Naive thymus-derived CD4-positive, alpha-beta T cell (primary cell): ENCODE measurements at regions of chr6 and their contacts with region 1.

Region 1: DNA sequence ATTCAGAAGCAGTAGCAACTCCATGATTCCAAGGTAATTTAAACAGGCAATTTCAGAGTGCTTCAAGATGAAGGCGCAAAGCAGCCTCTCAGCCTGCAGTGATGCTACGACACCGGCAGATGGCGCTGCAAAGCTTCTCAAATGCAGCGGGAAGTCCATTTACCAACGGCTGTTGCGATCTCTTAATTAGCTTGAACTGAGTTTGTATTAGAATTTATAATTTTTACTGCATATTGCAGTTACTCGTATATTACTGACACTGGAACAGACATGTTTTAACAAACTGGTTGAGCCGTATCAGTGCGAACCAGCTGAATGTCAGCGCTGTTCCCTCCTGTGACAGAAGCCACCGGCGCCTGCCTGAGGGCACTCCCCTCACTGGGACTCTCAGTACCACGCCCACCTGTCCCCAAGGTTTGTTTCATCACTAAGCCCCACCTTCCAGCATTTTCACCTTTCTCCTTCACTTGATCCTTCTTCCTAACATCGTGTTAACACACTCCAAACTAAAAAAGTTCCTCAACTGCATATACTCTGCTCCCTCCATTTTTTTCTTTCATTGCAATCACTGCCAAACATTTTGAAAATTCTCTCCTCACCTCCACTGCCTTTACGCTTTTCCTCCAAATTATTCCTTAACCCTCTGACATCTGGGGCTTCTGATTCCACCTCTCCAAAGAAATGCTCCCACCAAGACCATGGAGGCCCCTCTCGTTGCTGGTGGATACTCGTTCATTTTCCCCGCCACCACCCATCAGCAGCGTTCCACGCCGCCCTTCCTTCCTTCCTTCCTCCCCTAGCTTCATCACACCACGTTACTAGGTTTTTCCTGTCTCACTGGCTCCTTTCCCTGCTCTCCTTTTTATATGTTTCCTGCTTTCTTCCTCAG is 14.5 kb downstream of the GNL1 start:
- DNase-seq: peak; percentile 60 to 84 (median 81)
- ATAC-seq: peak; percentile 84
- H3K4me3 ChIP-seq: peak overlapping the region; percentile 64
- H3K4me3 Mint-ChIP-seq: peak overlapping the region; percentile 83 to 92 (median 86)
- H3K27ac ChIP-seq: peak overlapping the region; percentile 67
- H3K27ac Mint-ChIP-seq: peak overlapping the region; percentile 82 to 96 (median 93)
- H3K4me1 ChIP-seq: peaks cover 26 to 29% of the 10 kb centered on the region in 2 donors
- H3K4me1 Mint-ChIP-seq: peaks cover 29 to 38% (median 35%) of the 10 kb centered on the region in 7 donors
- H3K27me3 ChIP-seq: no peaks in the 10 kb centered on the region
- H3K27me3 Mint-ChIP-seq: peaks cover 0 to 3% (median 0%) of the 10 kb centered on the region in 5 donors

Region 2: GRCh38 chr6:30453508-30454116 is 88.1 kb before region 1 on chr6:
- CTCF ChIA-PET with region 1: interaction called, 4 read pairs
- POLR2A ChIA-PET with region 1: interaction called, 4 read pairs
- intact Hi-C with region 1: loop called in 1 of 2 experiments (anchors 1 kb)
- DNase-seq: peak; percentile 73 to 90 (median 81)
- ATAC-seq: peak; percentile 86
- H3K4me3 ChIP-seq: peak overlapping the region; percentile 43
- H3K4me3 Mint-ChIP-seq: peak overlapping the region; percentile 49 to 84 (median 73)
- H3K27ac ChIP-seq: no peak overlapping the region
- H3K27ac Mint-ChIP-seq: no peak overlapping the region
- H3K4me1 ChIP-seq: peaks cover 37 to 44% of the 10 kb centered on the region in 2 donors
- H3K4me1 Mint-ChIP-seq: peaks cover 23 to 56% (median 51%) of the 10 kb centered on the region in 7 donors
- H3K27me3 ChIP-seq: peaks cover 22 to 29% of the 10 kb centered on the region in 2 donors
- H3K27me3 Mint-ChIP-seq: peaks cover 67 to 91% (median 82%) of the 10 kb centered on the region in 5 donors

Region 3: GRCh38 chr6:30500421-30501355 is 41.1 kb before region 1 on chr6:
- CTCF ChIA-PET with region 1: interaction called, 77 read pairs
- POLR2A ChIA-PET with region 1: interaction called, 199 read pairs
- intact Hi-C with region 1: no loop called
- DNase-seq: no peak
- ATAC-seq: peak; percentile 35
- H3K4me3 ChIP-seq: peak overlapping the region; percentile 48
- H3K4me3 Mint-ChIP-seq: peak overlapping the region; percentile 76 to 89 (median 86)
- H3K27ac ChIP-seq: peak overlapping the region; percentile 36
- H3K27ac Mint-ChIP-seq: peak overlapping the region; percentile 39 to 93 (median 85)
- H3K4me1 ChIP-seq: peaks cover 9 to 31% of the 10 kb centered on the region in 2 donors
- H3K4me1 Mint-ChIP-seq: peaks cover 24 to 50% (median 46%) of the 10 kb centered on the region in 7 donors
- H3K27me3 ChIP-seq: no peaks in the 10 kb centered on the region
- H3K27me3 Mint-ChIP-seq: no peaks in the 10 kb centered on the region

Region 4: GRCh38 chr6:30556066-30556905 is 14.5 kb after region 1 on chr6 and contains the start of gene GNL1:
- CTCF ChIA-PET with region 1: interaction called, 41 read pairs
- POLR2A ChIA-PET with region 1: interaction called, 108 read pairs
- intact Hi-C with region 1: loop called (anchors 1 kb)
- DNase-seq: peak; percentile 95 to 99 (median 99)
- ATAC-seq: peak; percentile 94
- H3K4me3 ChIP-seq: peak within 1 kb of the TSS; percentile 97
- H3K4me3 Mint-ChIP-seq: peak within 1 kb of the TSS; percentile 92 to 100 (median 98)
- H3K27ac ChIP-seq: peak within 1 kb of the TSS; percentile 97
- H3K27ac Mint-ChIP-seq: peak within 1 kb of the TSS; percentile 98 to 100 (median 99)
- H3K4me1 ChIP-seq: peaks cover 8 to 19% of the 10 kb centered on the region in 2 donors
- H3K4me1 Mint-ChIP-seq: peaks cover 25 to 58% (median 45%) of the 10 kb centered on the region in 7 donors
- H3K27me3 ChIP-seq: no peaks in the 10 kb centered on the region
- H3K27me3 Mint-ChIP-seq: no peaks in the 10 kb centered on the region
- total RNA-seq, gene GNL1: 56.0 to 190 (median 73.1) TPM

Region 5: GRCh38 chr6:30600451-30600961 is 58.7 kb after region 1 on chr6:
- CTCF ChIA-PET with region 1: interaction called, 104 read pairs
- POLR2A ChIA-PET with region 1: interaction called, 57 read pairs
- intact Hi-C with region 1: loop called (anchors 1 kb)
- DNase-seq: no peak
- ATAC-seq: no peak
- H3K4me3 ChIP-seq: no peak overlapping the region
- H3K4me3 Mint-ChIP-seq: no peak overlapping the region
- H3K27ac ChIP-seq: peak overlapping the region; percentile 47
- H3K27ac Mint-ChIP-seq: peak overlapping the region in 7 of 9 donors; percentile 58 to 85 (median 79)
- H3K4me1 ChIP-seq: peaks cover 3 to 5% of the 10 kb centered on the region in 2 donors
- H3K4me1 Mint-ChIP-seq: peaks cover 16 to 35% (median 25%) of the 10 kb centered on the region in 7 donors
- H3K27me3 ChIP-seq: no peaks in the 10 kb centered on the region
- H3K27me3 Mint-ChIP-seq: no peaks in the 10 kb centered on the region

Region 6: DNA sequence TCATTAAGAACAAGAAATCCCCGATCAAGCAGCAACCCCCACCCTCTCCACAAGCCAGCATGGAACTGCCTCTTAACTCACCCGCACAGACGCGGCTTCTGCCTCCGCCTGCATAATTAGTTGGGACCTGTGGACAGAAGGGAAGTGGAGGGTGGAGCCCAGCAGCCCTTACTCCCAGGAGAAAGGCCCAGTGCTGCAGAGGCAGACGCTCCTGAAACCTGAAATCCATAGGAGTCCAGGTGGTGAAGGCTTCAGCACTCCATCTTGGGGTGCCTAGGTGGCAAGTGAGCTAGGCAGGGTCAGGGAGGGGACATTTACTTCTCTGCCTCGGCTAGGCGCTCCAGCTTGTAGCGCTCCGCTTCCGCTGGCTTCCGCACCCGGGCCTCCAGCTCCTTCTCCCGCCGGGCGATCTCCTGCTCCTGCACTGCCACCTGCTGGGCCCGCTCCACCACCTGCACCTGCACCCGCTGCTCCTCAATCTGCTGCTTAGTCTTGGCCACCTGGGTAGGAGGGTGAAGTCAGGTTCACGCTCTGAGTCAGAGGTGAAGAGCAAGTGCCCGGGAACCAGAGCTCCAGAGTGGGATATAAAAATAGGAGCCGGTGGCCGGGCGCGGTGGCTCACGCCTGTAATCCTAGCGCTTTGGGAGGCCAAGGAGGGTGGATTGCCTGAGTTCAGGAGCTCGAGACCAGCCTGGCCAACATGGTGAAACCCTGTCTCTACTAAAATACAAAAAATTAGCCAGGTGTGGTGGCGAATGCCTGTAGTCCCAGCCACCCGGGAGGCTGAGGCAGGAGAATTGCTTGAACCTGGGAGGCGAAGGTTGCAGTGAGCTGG is 189.1 kb after region 1 on chr6:
- CTCF ChIA-PET with region 1: interaction called, 15 read pairs
- POLR2A ChIA-PET with region 1: interaction called, 5 read pairs
- intact Hi-C with region 1: loop called in 1 of 2 experiments (anchors 1 kb)
- DNase-seq: peak; percentile 62 to 86 (median 81)
- ATAC-seq: peak; percentile 97
- H3K4me3 ChIP-seq: no peak overlapping the region
- H3K4me3 Mint-ChIP-seq: peak overlapping the region in 9 of 10 donors; percentile 27 to 69 (median 55)
- H3K27ac ChIP-seq: peak overlapping the region; percentile 52
- H3K27ac Mint-ChIP-seq: peak overlapping the region in 7 of 9 donors; percentile 29 to 79 (median 73)
- H3K4me1 ChIP-seq: peaks cover 14 to 30% of the 10 kb centered on the region in 2 donors
- H3K4me1 Mint-ChIP-seq: peaks cover 27 to 54% (median 42%) of the 10 kb centered on the region in 7 donors
- H3K27me3 ChIP-seq: no peaks in the 10 kb centered on the region
- H3K27me3 Mint-ChIP-seq: no peaks in the 10 kb centered on the region

Region 7: GRCh38 chr6:32462609-32463008 is 1920.8 kb after region 1 on chr6:
- CTCF ChIA-PET with region 1: no interaction called
- POLR2A ChIA-PET with region 1: no interaction called
- intact Hi-C with region 1: no loop called
- DNase-seq: peak in 1 of 9 donors; percentile 38
- ATAC-seq: no peak
- H3K4me3 ChIP-seq: no peak overlapping the region
- H3K4me3 Mint-ChIP-seq: no peak overlapping the region
- H3K27ac ChIP-seq: no peak overlapping the region
- H3K27ac Mint-ChIP-seq: no peak overlapping the region
- H3K4me1 ChIP-seq: no peaks in the 10 kb centered on the region
- H3K4me1 Mint-ChIP-seq: peaks cover 0 to 15% (median 12%) of the 10 kb centered on the region in 7 donors
- H3K27me3 ChIP-seq: no peaks in the 10 kb centered on the region
- H3K27me3 Mint-ChIP-seq: peaks cover 42 to 56% (median 48%) of the 10 kb centered on the region in 5 donors